ENCODE measurements at regions of chr3 and their contacts with region 1.

Region 1: DNA sequence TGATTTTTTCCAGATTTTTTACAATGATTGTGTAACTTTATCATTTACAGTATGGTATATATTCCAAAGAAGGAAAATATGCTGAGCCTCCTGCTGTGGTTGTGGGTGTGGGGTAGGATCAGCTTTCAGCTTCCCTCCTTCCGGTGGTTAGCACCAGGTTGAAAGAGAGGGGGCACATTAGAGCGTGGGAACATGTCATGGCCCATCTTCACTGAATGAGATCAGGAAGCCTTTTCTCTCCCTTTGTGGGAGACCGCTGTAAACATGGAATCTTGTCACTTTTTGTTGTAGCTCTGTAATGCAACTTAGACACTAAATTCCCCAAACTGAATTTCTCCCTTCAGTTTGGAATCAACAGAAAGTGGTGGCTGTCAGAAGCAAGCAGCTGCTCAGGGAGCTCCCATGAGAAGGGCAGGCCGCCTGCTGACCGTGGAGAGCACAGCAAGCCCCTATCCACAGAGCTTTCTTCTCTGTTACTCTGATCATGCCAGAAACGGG is 86.7 kb upstream of the LIMD1 start:
- DNase-seq: no peak
- H3K4me3 ChIP-seq: no peak overlapping the region
- H3K27ac ChIP-seq: no peak overlapping the region
- H3K4me1 ChIP-seq: peaks cover 10% of the 10 kb centered on the region
- H3K27me3 ChIP-seq: no peaks in the 10 kb centered on the region
- CTCF ChIP-seq: no peak

Region 2: DNA sequence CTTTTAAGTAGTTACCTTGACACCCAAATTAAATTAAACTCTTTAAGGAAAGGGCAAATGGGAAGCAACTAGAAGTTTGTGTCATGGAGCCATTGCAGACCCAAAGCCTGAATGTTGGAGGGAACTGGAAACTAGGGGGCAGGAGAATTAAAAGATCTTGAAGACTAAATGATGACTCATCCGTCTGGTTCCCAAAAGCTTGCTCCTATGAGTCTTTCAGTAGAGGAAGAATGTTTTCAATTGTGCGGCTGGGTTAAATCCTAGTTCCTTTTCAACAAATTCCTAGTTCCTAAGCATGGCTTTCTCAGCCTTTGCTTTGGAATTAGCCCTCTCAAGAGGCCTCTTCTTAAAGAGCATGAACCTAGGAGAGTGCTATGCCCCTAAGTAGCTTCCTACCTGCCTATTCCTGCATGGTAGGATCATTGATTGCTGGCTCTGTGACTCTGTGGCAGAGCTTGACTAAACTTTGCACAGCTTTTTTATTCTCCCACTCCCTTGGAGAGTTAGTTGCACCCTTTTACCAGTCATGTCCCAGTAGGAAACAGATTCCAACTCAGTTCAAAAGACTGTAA is 464.1 kb before region 1 on chr3:
- CTCF ChIA-PET with region 1: no interaction called
- dilution Hi-C with region 1: no loop called
- in situ Hi-C with region 1: no loop called
- intact Hi-C with region 1: loop called (anchors 2 kb)
- DNase-seq: peak; percentile 68
- H3K4me3 ChIP-seq: no peak overlapping the region
- H3K27ac ChIP-seq: no peak overlapping the region
- H3K4me1 ChIP-seq: peaks cover 13% of the 10 kb centered on the region
- H3K27me3 ChIP-seq: no peaks in the 10 kb centered on the region
- CTCF ChIP-seq: peak in 1 of 2 donors; percentile 19

Region 3: GRCh38 chr3:45528429-45528828 is 20.6 kb after region 1 on chr3:
- CTCF ChIA-PET with region 1: no interaction called
- dilution Hi-C with region 1: no loop called
- in situ Hi-C with region 1: no loop called
- intact Hi-C with region 1: no loop called
- DNase-seq: peak; percentile 42
- H3K4me3 ChIP-seq: no peak overlapping the region
- H3K27ac ChIP-seq: peak overlapping the region; percentile 12
- H3K4me1 ChIP-seq: peaks cover 12% of the 10 kb centered on the region
- H3K27me3 ChIP-seq: no peaks in the 10 kb centered on the region
- CTCF ChIP-seq: no peak

Region 4: DNA sequence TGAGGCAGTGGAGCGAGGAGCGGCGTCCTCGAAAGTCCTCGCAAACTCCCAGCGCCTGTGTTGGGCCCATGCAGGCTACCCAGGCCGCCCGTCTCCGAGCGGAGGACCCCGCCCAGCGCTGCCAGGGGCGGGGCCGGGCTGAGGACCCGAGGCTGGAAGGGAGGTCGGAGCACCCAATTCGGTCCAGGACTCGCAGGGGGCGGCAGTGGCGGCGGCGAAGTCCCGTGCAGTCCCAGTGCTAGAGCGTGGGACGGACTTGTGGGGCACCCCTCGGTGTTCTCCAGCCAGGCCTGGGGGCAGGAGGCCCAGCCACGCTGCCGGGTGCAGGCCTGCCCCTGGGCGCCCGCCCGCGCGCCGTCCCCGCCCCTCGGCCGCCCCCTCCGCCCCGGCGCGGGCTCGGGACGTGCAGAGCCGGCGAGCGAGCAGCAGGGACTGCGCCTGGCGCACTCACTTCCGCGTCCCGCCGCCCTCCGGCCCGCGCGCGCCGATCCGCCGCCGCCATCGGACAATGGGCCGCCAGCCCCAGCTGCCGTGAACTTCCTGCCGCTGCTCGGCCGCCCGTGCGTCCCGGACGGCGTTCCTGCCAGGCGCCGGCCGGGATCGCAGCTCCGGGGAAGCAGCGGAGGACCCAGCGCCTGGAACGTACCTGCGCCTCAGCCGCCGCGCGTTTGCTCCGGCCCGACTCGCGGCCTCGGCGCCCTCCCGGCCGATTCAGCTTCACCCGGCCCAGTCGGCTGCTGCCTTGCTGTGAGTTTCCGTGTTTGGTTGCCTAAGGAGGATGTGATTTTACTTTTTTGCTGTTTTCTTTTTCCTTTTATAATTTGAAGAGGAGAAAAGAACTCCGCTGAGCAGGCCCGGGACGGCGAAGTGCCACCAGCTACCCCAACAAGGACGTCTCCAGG is 86.1 kb after region 1 on chr3:
- CTCF ChIA-PET with region 1: interaction called, 3 read pairs
- dilution Hi-C with region 1: no loop called
- in situ Hi-C with region 1: no loop called
- intact Hi-C with region 1: loop called (anchors 1 kb)
- DNase-seq: peak; percentile 70
- H3K4me3 ChIP-seq: peak overlapping the region; percentile 45 to 56 (median 54)
- H3K27ac ChIP-seq: peak overlapping the region; percentile 63
- H3K4me1 ChIP-seq: peaks cover 42% of the 10 kb centered on the region
- H3K27me3 ChIP-seq: no peaks in the 10 kb centered on the region
- CTCF ChIP-seq: no peak

Region 5: DNA sequence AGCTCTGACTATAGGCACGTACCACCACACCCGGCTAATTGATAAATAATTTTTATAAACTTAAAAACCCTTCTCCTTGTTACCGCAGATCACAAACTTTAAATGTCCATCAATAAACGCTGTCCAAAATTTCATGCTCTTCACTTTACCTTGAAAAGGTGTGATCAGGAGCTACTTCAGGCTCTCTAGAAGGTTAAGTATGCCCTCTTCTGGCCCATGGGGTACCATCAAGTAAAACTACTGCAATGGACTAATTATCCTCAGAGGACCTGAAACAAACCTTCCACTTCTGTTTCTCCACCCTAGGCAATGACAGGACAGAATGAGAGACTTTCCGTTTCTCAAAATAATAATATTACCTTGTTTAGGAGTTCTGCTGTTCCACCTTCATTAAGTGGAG is 324.8 kb after region 1 on chr3:
- CTCF ChIA-PET with region 1: no interaction called
- dilution Hi-C with region 1: no loop called
- in situ Hi-C with region 1: loop called in 1 of 2 experiments (anchors 10 kb)
- intact Hi-C with region 1: loop called (anchors 2 kb)
- DNase-seq: peak; percentile 38
- H3K4me3 ChIP-seq: no peak overlapping the region
- H3K27ac ChIP-seq: no peak overlapping the region
- H3K4me1 ChIP-seq: no peaks in the 10 kb centered on the region
- H3K27me3 ChIP-seq: no peaks in the 10 kb centered on the region
- CTCF ChIP-seq: peak; percentile 49 to 72

Region 6: DNA sequence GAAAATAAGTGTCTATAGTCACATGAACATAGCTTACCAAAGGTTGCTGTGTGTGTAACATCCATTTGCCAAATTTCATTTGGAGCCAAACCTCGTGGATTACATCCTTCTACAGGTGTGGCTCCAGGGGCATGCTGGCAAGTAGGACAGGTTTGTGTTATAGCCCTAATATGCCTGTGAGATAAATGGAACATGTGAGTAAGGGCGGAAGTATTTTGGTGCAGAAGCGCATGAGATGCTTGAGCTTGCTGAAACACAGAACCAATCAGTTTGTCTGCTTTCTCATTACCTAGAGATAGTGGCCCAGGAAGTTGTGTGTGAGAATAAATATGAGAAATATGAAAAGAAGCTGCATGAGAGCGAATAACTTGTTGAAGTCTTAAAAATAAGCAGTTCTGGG is 541.2 kb after region 1 on chr3:
- CTCF ChIA-PET with region 1: no interaction called
- dilution Hi-C with region 1: no loop called
- in situ Hi-C with region 1: no loop called
- intact Hi-C with region 1: no loop called
- DNase-seq: no peak
- H3K4me3 ChIP-seq: no peak overlapping the region
- H3K27ac ChIP-seq: no peak overlapping the region
- H3K4me1 ChIP-seq: no peaks in the 10 kb centered on the region
- H3K27me3 ChIP-seq: no peaks in the 10 kb centered on the region
- CTCF ChIP-seq: no peak